ENCODE measurements at regions of chr15 and their contacts with region 1.

Region 1: DNA sequence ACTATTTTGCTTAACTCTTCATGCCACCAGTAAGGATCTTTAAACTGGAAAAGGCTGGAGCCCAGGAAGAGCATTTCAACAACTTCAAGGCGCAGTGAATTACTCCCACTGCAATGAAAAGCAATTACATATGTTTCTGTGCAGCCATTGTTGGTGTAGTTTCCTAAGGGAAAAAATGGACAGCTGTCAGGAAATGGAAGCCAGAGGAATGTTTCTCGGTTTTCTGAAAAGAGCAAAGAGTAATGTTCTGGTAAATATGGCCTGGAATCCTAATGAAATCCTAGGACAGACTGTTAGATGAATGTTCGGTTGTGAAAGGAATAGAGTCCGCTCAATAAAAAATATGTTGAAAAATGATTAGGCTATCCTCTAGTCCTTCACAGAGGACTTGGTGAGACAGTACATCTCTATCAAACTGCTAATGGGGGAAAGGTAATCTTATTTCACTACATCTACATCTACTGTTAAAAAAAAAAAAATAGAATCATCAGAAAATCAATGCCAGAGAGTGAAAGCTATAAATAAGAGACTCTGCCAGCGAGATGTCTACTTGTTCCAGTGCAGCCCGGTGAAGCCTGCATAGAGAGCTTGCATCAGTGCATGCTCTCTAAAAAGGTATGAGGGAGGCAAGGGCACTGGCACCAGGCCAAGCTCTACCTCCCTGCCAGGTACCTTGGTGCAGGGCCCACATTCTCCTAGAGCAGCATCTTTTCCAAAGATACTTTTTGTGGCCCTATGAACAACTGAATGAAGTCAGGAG is 68.2 kb upstream of the TJP1 start:
- DNase-seq: no peak
- H3K4me3 Mint-ChIP-seq: no peak overlapping the region
- H3K27ac Mint-ChIP-seq: no peak overlapping the region
- H3K4me1 Mint-ChIP-seq: no peaks in the 10 kb centered on the region
- H3K27me3 Mint-ChIP-seq: peaks cover 19% of the 10 kb centered on the region

Region 2: GRCh38 chr15:29880341-29880740 is 10.2 kb before region 1 on chr15:
- CTCF ChIA-PET with region 1: no interaction called
- POLR2A ChIA-PET with region 1: no interaction called
- DNase-seq: no peak
- H3K4me3 Mint-ChIP-seq: no peak overlapping the region
- H3K27ac Mint-ChIP-seq: no peak overlapping the region
- H3K4me1 Mint-ChIP-seq: no peaks in the 10 kb centered on the region
- H3K27me3 Mint-ChIP-seq: peaks cover 24% of the 10 kb centered on the region

Region 3: GRCh38 chr15:29903785-29904464 is 13.4 kb after region 1 on chr15:
- CTCF ChIA-PET with region 1: interaction called, 3 read pairs
- POLR2A ChIA-PET with region 1: interaction called, 11 read pairs
- DNase-seq: no peak
- H3K4me3 Mint-ChIP-seq: no peak overlapping the region
- H3K27ac Mint-ChIP-seq: no peak overlapping the region
- H3K4me1 Mint-ChIP-seq: no peaks in the 10 kb centered on the region
- H3K27me3 Mint-ChIP-seq: no peaks in the 10 kb centered on the region